ENCODE measurements at regions of chr1 and their contacts with region 1.

Region 1: GRCh38 chr1:206122725-206123124 is 5.5 kb upstream of the AVPR1B start:
- DNase-seq: no peak
- H3K4me3 ChIP-seq: no peak overlapping the region
- H3K27ac ChIP-seq: no peak overlapping the region
- H3K4me1 ChIP-seq: no peaks in the 10 kb centered on the region
- H3K27me3 ChIP-seq: no peaks in the 10 kb centered on the region
- CTCF ChIP-seq: no peak
- EP300 ChIP-seq: no peak
- POLR2A ChIP-seq: no peak

Region 2: GRCh38 chr1:205800981-205801703 is 321.6 kb before region 1 on chr1:
- intact Hi-C with region 1: loop called in 1 of 4 experiments (anchors 5 kb)
- DNase-seq: no peak
- H3K4me3 ChIP-seq: no peak overlapping the region
- H3K27ac ChIP-seq: no peak overlapping the region
- H3K4me1 ChIP-seq: peaks cover 7% of the 10 kb centered on the region
- H3K27me3 ChIP-seq: no peaks in the 10 kb centered on the region
- CTCF ChIP-seq: no peak
- EP300 ChIP-seq: no peak
- POLR2A ChIP-seq: no peak

Measured in ovary (tissue), 10 donors.